ENCODE measurements at regions of chr15 and their contacts with region 1.

Region 1: DNA sequence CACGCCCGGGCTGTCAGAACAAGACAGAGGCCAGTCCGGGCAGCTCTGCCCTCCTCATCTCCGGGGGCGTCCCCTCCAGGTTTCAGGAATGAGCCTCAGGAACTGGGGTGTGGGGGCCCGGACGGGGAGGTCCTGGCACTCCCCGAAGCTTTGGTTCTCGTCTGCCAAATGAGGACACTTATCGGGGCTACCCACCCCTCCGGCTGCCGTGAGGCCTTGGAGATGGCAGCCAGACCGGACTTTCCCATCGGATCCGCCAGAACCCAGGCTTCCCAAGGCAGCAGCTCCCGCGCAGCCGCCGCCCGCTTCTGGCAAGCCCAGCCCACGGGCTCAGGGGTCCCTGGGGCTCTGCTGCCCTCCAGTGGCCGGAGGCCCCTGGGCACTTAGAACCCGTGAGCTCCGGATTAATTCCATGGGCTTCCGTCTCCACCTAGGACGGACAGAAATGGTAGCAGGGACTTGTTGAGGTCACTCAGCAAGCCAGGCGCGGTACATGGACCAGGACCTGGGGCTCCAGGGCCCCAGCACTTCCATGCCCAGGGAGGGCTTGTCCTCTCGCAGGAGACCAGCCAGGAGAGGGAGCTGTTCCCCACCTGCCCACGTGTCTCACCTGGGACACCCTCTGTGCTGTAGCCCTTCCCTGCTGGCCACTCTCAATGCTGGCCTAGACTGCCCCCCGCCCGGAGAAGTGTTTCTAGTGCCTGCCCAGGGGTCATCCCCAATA is 89.4 kb downstream of the LINGO1 start:
- DNase-seq: peak; percentile 84
- H3K4me3 Mint-ChIP-seq: peak overlapping the region; percentile 67
- H3K27ac Mint-ChIP-seq: no peak overlapping the region
- H3K4me1 Mint-ChIP-seq: peaks cover 10% of the 10 kb centered on the region
- H3K27me3 Mint-ChIP-seq: no peaks in the 10 kb centered on the region

Region 2: GRCh38 chr15:77107531-77108355 is 435.6 kb before region 1 on chr15:
- CTCF ChIA-PET with region 1: interaction called, 30 read pairs
- intact Hi-C with region 1: loop called (anchors 1 kb)
- DNase-seq: peak; percentile 71
- H3K4me3 Mint-ChIP-seq: no peak overlapping the region
- H3K27ac Mint-ChIP-seq: no peak overlapping the region
- H3K4me1 Mint-ChIP-seq: no peaks in the 10 kb centered on the region
- H3K27me3 Mint-ChIP-seq: no peaks in the 10 kb centered on the region

Region 3: DNA sequence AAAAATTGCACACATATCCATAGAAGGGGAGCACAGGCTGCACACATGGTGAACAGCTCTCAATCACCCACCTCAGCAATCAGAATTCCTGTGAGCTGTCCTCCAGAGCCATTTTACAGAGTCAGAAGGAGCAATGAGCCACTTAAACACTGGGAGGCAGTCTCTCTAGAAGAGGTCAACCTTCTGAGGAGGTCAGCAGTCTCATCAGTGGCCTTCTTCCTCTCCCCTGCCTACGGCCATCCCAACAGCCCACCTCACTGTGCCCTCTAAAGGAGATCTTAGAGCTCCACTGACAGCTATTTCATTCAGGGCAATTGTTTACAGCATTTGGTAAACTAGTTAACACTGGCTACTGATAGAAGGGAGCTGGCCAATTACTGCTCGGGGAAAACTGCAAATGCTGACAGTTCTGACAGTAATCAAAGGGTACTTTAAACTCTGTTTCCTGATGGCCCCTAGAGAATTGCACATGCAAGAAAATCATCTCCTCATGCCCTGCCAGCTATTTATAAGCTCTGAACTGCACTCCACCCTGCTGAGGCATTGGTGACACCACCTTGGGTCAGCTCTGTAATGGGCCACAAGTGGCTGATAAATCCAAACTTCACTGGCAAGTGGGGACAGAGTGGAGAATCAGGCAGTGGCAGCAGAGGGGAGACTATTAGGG is 430.4 kb before region 1 on chr15:
- CTCF ChIA-PET with region 1: interaction called, 30 read pairs
- intact Hi-C with region 1: loop called (anchors 1 kb)
- DNase-seq: no peak
- H3K4me3 Mint-ChIP-seq: no peak overlapping the region
- H3K27ac Mint-ChIP-seq: no peak overlapping the region
- H3K4me1 Mint-ChIP-seq: no peaks in the 10 kb centered on the region
- H3K27me3 Mint-ChIP-seq: no peaks in the 10 kb centered on the region

Region 4: DNA sequence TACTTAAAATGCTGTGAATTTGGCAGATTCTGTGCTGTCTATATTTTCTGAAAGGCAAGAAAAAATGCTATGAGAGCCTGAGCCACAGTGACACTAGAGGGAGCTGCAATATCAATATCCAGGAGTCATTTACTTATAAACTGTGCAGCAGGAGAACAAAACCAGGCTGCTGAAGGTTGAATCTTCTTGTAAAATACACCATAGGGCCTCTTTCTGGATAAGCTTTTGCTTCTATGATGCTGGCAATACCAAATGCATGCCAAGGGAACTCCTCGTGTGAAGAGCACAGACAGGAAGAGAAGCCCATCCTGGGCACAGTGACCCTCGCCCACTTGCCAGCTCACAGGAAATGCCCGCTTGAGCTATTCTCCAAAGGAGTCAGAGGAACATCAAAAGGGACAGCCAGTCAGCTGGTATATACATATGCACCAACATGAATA is 424.4 kb before region 1 on chr15:
- CTCF ChIA-PET with region 1: interaction called, 27 read pairs
- intact Hi-C with region 1: loop called (anchors 1 kb)
- DNase-seq: peak; percentile 64
- H3K4me3 Mint-ChIP-seq: no peak overlapping the region
- H3K27ac Mint-ChIP-seq: no peak overlapping the region
- H3K4me1 Mint-ChIP-seq: peaks cover 8% of the 10 kb centered on the region
- H3K27me3 Mint-ChIP-seq: no peaks in the 10 kb centered on the region

Region 5: GRCh38 chr15:77186594-77187011 is 356.7 kb before region 1 on chr15:
- CTCF ChIA-PET with region 1: interaction called, 20 read pairs
- intact Hi-C with region 1: loop called (anchors 1 kb)
- DNase-seq: peak; percentile 35
- H3K4me3 Mint-ChIP-seq: no peak overlapping the region
- H3K27ac Mint-ChIP-seq: no peak overlapping the region
- H3K4me1 Mint-ChIP-seq: peaks cover 52% of the 10 kb centered on the region
- H3K27me3 Mint-ChIP-seq: no peaks in the 10 kb centered on the region

Measured in activated naive CD4-positive, alpha-beta T cell treated with anti-CD3 and anti-CD28 coated beads for 36 hours (primary cell).